HEK293 (cell line): ENCODE measurements at regions of chrX and their contacts with region 1.

Region 1: GRCh38 chrX:132292793-132293192 is 73.5 kb upstream of the RAP2C start:
- H3K4me3 ChIP-seq: no peak overlapping the region
- H3K27ac ChIP-seq: no peak overlapping the region; the same call in 1 of the 2 replicates
- H3K4me1 ChIP-seq: no peaks in the 10 kb centered on the region
- CTCF ChIP-seq: peak; percentile 52; the same call in 1 of the 2 replicates

Region 2: GRCh38 chrX:132270699-132271098 is 22.1 kb before region 1 on chrX:
- CTCF ChIA-PET with region 1: interaction called, 19 read pairs
- POLR2A ChIA-PET with region 1: no interaction called
- H3K4me3 ChIP-seq: no peak overlapping the region
- H3K27ac ChIP-seq: no peak overlapping the region
- H3K4me1 ChIP-seq: no peaks in the 10 kb centered on the region
- CTCF ChIP-seq: no peak

Region 3: DNA sequence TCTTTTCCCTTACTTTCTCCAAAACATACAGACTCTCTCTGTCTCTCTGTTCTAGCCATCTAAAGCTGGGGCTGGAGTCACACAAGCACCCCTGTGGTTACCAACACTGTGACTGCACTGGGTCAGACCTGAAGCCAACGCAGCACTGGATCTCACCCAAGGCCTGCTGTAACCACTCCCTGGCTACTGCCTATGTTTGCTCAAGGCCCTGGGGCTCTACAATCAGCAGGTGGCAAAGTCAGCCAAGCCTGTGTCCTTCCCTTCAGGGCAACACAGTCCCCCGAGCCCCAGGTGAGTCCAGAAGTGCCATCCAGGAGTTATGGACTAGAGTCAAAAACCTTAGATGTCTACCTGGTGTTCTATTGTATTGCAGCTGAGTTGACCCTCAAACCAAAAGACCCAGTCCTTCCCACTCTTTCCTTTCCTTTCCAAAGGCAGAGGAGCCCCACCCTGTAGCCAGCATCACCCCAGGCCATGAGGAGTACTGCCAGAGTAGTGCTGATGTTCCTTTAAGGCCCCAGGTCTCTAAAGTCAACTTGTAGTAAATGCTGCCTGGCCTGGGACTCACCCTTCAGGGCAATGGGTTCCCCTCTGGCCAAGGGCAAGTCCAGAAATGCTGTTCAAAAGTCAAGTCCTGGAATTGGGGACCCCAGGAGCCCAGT is 14.7 kb before region 1 on chrX:
- CTCF ChIA-PET with region 1: interaction called, 13 read pairs
- POLR2A ChIA-PET with region 1: no interaction called
- H3K4me3 ChIP-seq: no peak overlapping the region
- H3K27ac ChIP-seq: no peak overlapping the region
- H3K4me1 ChIP-seq: no peaks in the 10 kb centered on the region
- CTCF ChIP-seq: no peak

Region 4: DNA sequence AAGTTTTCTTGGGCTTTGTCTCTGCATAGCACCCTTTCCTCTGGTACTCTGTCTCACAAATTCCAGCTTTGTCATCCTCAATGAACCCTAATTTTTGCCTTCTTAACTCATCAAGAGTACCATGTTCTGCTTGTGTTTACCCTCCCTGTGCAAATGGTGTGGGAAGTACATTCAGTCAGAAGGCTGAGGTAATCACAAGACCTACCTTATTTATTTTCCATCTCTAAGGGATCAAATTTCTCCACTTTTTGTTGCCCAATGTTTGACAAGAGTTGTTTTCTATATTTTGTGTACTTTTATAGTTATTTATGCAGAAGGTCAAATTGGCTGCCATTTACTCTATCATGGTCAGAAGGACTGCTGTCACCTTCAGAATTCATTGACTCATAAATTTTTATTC is 11.8 kb after region 1 on chrX:
- CTCF ChIA-PET with region 1: interaction called, 21 read pairs
- POLR2A ChIA-PET with region 1: no interaction called
- H3K4me3 ChIP-seq: no peak overlapping the region
- H3K27ac ChIP-seq: no peak overlapping the region
- H3K4me1 ChIP-seq: no peaks in the 10 kb centered on the region
- CTCF ChIP-seq: no peak

Region 5: GRCh38 chrX:132413459-132413858 is 120.7 kb after region 1 on chrX:
- CTCF ChIA-PET with region 1: no interaction called
- POLR2A ChIA-PET with region 1: no interaction called
- H3K4me3 ChIP-seq: no peak overlapping the region
- H3K27ac ChIP-seq: no peak overlapping the region
- H3K4me1 ChIP-seq: no peaks in the 10 kb centered on the region
- CTCF ChIP-seq: no peak

Region 6: DNA sequence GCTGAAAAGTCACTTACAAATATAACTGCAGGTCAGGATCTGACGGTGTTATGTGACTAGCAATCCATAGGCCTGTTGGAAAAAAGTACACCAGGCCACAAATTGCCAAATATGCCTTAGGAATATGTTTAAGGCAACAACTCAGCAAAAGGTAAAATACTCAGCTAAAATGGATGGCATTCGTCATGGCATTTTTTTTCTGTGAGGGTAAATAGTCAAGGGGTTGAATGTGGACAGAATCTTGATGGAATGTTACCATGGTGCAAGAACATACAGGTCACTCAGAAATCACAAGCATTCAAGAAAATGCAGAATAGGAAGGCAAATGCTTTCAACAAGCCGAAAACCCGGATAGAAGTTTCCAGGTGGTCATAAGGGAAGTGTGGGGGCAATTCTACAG is 317.7 kb after region 1 on chrX:
- CTCF ChIA-PET with region 1: interaction called, 58 read pairs
- POLR2A ChIA-PET with region 1: no interaction called
- H3K4me3 ChIP-seq: no peak overlapping the region
- H3K27ac ChIP-seq: no peak overlapping the region
- H3K4me1 ChIP-seq: no peaks in the 10 kb centered on the region
- CTCF ChIP-seq: no peak

Region 7: DNA sequence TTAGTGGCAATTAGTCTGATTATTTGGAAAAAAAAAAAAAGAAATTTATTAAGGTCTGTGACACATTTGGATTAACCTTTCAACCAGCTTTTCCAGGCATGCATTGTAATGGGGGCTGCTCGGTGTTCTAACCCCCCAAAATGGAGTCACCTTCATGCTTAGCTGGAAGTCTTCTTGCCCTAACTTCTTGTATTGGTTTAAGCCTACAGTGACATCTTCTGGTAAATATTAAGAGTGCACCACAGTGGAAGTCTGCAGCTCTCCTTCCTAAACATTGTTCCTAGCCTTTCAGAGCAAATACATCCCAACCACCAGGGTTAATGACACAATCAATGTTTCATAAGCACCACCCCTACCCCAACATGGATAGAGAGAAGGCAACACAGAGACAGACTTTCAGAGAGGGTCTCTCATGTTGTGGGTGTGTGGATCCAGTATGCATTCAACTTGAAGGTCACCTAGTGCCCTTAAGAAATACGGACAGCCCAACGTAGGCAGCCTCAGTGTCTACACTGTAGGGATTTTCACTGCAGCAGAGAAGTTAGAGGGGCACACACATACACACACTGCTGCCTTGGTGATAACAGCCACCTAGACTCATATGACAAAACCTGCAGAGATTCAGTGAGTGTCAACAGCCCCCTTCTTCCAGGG is 338.9 kb after region 1 on chrX:
- CTCF ChIA-PET with region 1: interaction called, 23 read pairs
- POLR2A ChIA-PET with region 1: no interaction called
- H3K4me3 ChIP-seq: no peak overlapping the region
- H3K27ac ChIP-seq: no peak overlapping the region
- H3K4me1 ChIP-seq: no peaks in the 10 kb centered on the region
- CTCF ChIP-seq: peak; percentile 61